Transverse colon (tissue), 4 donors: ENCODE measurements at regions of chr12 and their contacts with region 1.

Region 1: GRCh38 chr12:49244176-49244575 is 20.7 kb upstream of the TUBA1C start:
- DNase-seq: no peak
- H3K4me3 ChIP-seq: no peak overlapping the region
- H3K27ac ChIP-seq: no peak overlapping the region
- H3K4me1 ChIP-seq: no peaks in the 10 kb centered on the region
- H3K27me3 ChIP-seq: no peaks in the 10 kb centered on the region
- CTCF ChIP-seq: no peak
- EP300 ChIP-seq: no peak
- POLR2A ChIP-seq: no peak

Region 2: DNA sequence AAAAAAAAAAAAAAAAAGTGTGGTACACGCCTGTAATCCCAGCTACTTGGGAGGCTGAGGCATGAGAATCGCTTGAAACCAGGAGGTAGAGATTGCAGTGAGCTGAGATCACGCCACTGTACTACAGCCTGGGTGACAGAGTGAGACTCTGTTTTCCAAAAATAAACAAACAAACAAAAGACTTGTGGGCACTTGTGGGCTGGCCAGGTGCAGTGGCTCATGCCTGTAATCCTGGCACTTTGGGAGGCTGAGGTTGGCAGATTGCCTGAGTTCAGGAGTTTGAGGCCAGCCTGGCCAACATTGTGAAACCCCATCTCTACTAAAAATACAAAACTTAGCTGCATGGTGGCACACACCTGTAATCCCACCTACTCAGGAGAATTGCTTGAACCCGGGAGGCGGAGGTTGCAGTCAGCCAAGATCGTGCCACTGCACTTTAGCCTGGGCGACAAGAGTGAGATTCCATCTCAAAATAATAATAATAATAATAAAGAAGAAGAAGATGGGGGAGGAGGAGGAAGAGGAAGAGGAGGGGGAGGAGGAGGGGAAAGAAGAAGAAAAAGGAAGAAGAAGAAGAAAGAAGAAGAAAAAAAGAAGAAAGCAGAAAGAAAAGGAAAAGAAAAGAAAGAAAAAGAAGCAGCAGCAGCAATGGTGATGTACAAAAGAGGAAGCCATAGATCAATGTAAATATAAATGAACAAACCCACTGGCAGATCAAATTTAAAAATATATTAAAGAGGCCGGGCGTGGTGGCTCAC is 499.7 kb before region 1 on chr12:
- in situ Hi-C with region 1: no loop called
- intact Hi-C with region 1: loop called (anchors 5 kb)
- DNase-seq: no peak
- H3K4me3 ChIP-seq: no peak overlapping the region
- H3K27ac ChIP-seq: no peak overlapping the region
- H3K4me1 ChIP-seq: no peaks in the 10 kb centered on the region
- H3K27me3 ChIP-seq: peaks cover 15% of the 10 kb centered on the region
- CTCF ChIP-seq: no peak
- EP300 ChIP-seq: no peak
- POLR2A ChIP-seq: no peak